CD8-positive, alpha-beta T cell (primary cell): ENCODE measurements at regions of chr4 and their contacts with region 1.

Region 1: GRCh38 chr4:122922877-122923511 is 597 bp upstream of the NUDT6 start:
- DNase-seq: peak; percentile 72 to 92 (median 89)
- ATAC-seq: peak; percentile 98
- H3K4me3 ChIP-seq: peak overlapping the region; percentile 79 to 87
- H3K4me3 Mint-ChIP-seq: peak overlapping the region; percentile 99
- H3K27ac ChIP-seq: peak overlapping the region; percentile 62 to 74
- H3K27ac Mint-ChIP-seq: peak overlapping the region; percentile 96
- H3K4me1 ChIP-seq: peaks cover 20% of the 10 kb centered on the region
- H3K4me1 Mint-ChIP-seq: peaks cover 17% of the 10 kb centered on the region
- H3K27me3 ChIP-seq: no peaks in the 10 kb centered on the region
- H3K27me3 Mint-ChIP-seq: no peaks in the 10 kb centered on the region
- CTCF ChIP-seq: no peak

Region 2: GRCh38 chr4:121823505-121824170 is 1099.4 kb before region 1 on chr4 and contains the start of gene CCNA2:
- CTCF ChIA-PET with region 1: no interaction called
- POLR2A ChIA-PET with region 1: no interaction called
- intact Hi-C with region 1: loop called (anchors 10 kb)
- DNase-seq: peak; percentile 90 to 97 (median 95)
- ATAC-seq: peak; percentile 98
- H3K4me3 ChIP-seq: peak within 1 kb of the TSS; percentile 62 to 74
- H3K4me3 Mint-ChIP-seq: peak within 1 kb of the TSS; percentile 91
- H3K27ac ChIP-seq: peak within 1 kb of the TSS; percentile 64 to 77
- H3K27ac Mint-ChIP-seq: peak within 1 kb of the TSS; percentile 86
- H3K4me1 ChIP-seq: peaks cover 8% of the 10 kb centered on the region
- H3K4me1 Mint-ChIP-seq: peaks cover 13% of the 10 kb centered on the region
- H3K27me3 ChIP-seq: no peaks in the 10 kb centered on the region
- H3K27me3 Mint-ChIP-seq: no peaks in the 10 kb centered on the region
- CTCF ChIP-seq: no peak
- total RNA-seq, gene CCNA2: 0.22 to 0.43 TPM

Region 3: DNA sequence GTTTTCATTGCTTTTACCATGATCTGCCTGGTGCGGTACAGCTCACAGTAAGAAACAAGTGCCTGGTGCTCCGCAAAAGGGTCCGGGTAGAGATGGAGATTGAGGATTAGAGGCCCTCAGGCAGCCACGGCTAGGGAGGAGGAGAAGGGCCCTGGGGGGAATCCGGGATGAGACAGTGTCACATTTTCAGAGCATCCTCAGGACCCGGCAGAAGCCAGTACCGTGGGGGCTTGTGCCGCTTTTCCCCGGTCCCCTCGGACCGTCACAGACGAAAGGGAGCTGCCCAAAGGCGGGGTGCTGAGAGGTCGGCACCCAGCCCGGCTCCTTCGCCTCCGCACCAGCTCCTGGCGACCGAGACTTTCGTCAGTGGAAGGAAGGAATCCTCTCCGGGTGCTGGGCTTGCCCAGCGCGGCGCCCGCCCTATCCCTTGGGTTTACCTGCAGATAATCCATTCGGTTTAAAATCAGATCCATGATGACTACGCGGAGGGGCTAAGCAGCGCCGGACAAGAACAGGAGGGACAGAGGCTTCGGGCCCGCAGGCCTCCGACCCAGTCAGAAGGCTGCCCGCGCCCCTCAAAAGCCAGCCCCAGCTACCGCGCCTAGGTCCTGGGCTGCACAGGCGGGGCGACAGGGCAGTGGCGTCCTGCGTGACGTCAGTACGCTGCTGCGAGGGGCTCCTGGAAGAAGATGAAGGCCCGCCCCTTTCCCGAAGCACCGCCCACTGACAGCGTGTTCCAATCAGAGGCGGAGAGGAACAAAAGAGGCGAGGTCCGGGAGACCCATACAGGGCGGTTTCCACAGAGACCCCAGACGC is 1052.9 kb before region 1 on chr4 and contains the start of gene BBS7:
- CTCF ChIA-PET with region 1: no interaction called
- POLR2A ChIA-PET with region 1: no interaction called
- intact Hi-C with region 1: loop called in 1 of 2 experiments (anchors 10 kb)
- DNase-seq: peak; percentile 91 to 98 (median 96)
- ATAC-seq: peak; percentile 99
- H3K4me3 ChIP-seq: peak within 1 kb of the TSS; percentile 88 to 92
- H3K4me3 Mint-ChIP-seq: peak within 1 kb of the TSS; percentile 97
- H3K27ac ChIP-seq: peak within 1 kb of the TSS; percentile 74 to 79
- H3K27ac Mint-ChIP-seq: peak within 1 kb of the TSS; percentile 92
- H3K4me1 ChIP-seq: peaks cover 6% of the 10 kb centered on the region
- H3K4me1 Mint-ChIP-seq: peaks cover 14% of the 10 kb centered on the region
- H3K27me3 ChIP-seq: no peaks in the 10 kb centered on the region
- H3K27me3 Mint-ChIP-seq: peaks cover 7% of the 10 kb centered on the region
- CTCF ChIP-seq: no peak
- total RNA-seq, gene BBS7: 3.4 to 4.7 TPM

Region 4: GRCh38 chr4:122309988-122310626 is 612.9 kb before region 1 on chr4:
- CTCF ChIA-PET with region 1: no interaction called
- POLR2A ChIA-PET with region 1: no interaction called
- intact Hi-C with region 1: loop called in 1 of 2 experiments (anchors 10 kb)
- DNase-seq: peak in 1 of 9 experiments; percentile 11
- ATAC-seq: no peak
- H3K4me3 ChIP-seq: no peak overlapping the region
- H3K4me3 Mint-ChIP-seq: no peak overlapping the region
- H3K27ac ChIP-seq: no peak overlapping the region
- H3K27ac Mint-ChIP-seq: no peak overlapping the region
- H3K4me1 ChIP-seq: no peaks in the 10 kb centered on the region
- H3K4me1 Mint-ChIP-seq: no peaks in the 10 kb centered on the region
- H3K27me3 ChIP-seq: no peaks in the 10 kb centered on the region
- H3K27me3 Mint-ChIP-seq: no peaks in the 10 kb centered on the region
- CTCF ChIP-seq: peak; percentile 63

Region 5: DNA sequence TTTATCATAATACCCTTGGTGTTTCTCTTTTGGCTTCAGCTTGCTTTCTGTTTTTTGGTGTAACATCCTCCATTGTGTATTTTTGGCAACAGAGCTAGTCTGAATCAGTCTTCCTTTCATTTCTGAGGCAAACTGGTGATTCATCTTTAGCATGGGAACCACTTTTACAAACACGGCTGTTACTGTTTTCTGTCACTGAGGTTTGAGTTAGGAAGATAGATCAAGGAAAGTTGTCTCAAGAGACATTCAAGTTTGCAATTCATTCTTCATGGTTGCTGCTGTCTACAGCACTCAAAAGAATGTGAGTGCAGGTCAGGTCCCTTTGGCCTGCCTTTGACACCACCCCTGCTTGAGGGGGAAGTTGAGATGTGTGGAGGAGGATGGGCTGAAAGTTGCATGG is 338.5 kb before region 1 on chr4:
- CTCF ChIA-PET with region 1: no interaction called
- POLR2A ChIA-PET with region 1: no interaction called
- intact Hi-C with region 1: loop called in 1 of 2 experiments (anchors 10 kb)
- DNase-seq: peak in 1 of 9 experiments; percentile 11
- ATAC-seq: peak; percentile 48
- H3K4me3 ChIP-seq: no peak overlapping the region
- H3K4me3 Mint-ChIP-seq: no peak overlapping the region
- H3K27ac ChIP-seq: no peak overlapping the region
- H3K27ac Mint-ChIP-seq: peak overlapping the region; percentile 30
- H3K4me1 ChIP-seq: no peaks in the 10 kb centered on the region
- H3K4me1 Mint-ChIP-seq: peaks cover 7% of the 10 kb centered on the region
- H3K27me3 ChIP-seq: no peaks in the 10 kb centered on the region
- H3K27me3 Mint-ChIP-seq: no peaks in the 10 kb centered on the region
- CTCF ChIP-seq: no peak

Region 6: DNA sequence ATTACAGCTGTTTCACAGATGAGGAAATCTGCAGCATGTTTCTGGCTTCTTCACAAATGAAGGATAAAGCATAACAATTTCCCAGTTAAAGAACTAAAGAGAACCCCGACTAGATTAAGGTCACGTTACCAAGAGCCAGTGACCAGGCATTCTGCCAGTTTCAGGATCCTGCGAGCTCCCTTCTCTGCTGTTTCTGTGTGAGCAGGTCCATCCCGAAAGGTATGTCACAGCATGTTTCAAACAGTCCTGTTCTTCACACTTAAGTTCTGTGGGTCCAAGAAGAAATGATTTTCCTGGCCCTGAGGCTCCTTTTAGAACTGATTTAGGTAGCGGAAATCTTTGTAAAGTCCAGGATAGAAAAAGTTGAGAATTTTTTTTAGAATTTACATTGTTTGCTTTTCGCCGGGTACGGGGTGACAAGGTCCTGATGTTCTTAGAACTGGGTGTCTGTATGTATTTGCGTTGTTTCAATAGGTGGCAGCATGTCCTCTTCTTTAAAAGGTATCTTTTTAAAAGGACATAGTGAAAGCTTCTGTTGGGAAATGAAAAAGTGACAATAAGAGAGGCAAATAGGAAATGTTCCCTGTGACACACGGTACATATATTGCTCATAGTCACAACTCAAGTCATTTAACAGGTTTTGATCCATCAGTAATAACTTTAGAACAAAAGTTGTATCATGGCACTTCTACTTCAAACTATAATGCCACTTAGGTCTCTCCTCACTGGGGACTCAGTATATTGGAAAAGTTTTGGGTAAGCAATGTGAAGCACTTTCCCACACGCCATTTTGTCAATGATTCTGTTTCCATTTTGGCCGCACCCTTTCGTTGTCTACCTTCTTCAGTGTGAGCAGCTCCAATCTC is 320.5 kb before region 1 on chr4:
- CTCF ChIA-PET with region 1: no interaction called
- POLR2A ChIA-PET with region 1: no interaction called
- intact Hi-C with region 1: loop called in 1 of 2 experiments (anchors 5 kb)
- DNase-seq: peak in 2 of 9 experiments; percentile 31 to 51
- ATAC-seq: no peak
- H3K4me3 ChIP-seq: no peak overlapping the region
- H3K4me3 Mint-ChIP-seq: no peak overlapping the region
- H3K27ac ChIP-seq: no peak overlapping the region
- H3K27ac Mint-ChIP-seq: no peak overlapping the region
- H3K4me1 ChIP-seq: no peaks in the 10 kb centered on the region
- H3K4me1 Mint-ChIP-seq: no peaks in the 10 kb centered on the region
- H3K27me3 ChIP-seq: no peaks in the 10 kb centered on the region
- H3K27me3 Mint-ChIP-seq: peaks cover 20% of the 10 kb centered on the region
- CTCF ChIP-seq: no peak

Region 7: DNA sequence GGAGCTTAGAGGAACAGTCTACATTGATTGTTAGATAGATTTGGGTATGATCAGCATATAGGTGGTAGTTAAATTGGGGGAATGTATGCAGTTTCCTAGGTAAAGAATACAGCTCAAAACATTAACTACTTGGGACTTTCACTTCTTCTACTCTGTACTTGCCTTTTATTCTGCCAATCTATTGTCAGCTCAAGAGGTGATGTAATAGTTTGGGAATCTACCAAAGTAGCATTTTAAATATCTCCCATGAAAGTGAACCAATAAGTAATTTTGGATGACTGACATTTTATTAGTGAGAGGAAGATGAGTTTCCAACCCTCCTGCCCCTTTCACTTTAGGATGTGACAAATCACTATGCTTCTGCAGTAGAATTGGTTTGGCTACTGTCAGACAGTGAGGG is 44.0 kb before region 1 on chr4:
- CTCF ChIA-PET with region 1: no interaction called
- POLR2A ChIA-PET with region 1: no interaction called
- intact Hi-C with region 1: no loop called
- DNase-seq: no peak
- ATAC-seq: no peak
- H3K4me3 ChIP-seq: no peak overlapping the region
- H3K4me3 Mint-ChIP-seq: no peak overlapping the region
- H3K27ac ChIP-seq: no peak overlapping the region
- H3K27ac Mint-ChIP-seq: no peak overlapping the region
- H3K4me1 ChIP-seq: no peaks in the 10 kb centered on the region
- H3K4me1 Mint-ChIP-seq: no peaks in the 10 kb centered on the region
- H3K27me3 ChIP-seq: no peaks in the 10 kb centered on the region
- H3K27me3 Mint-ChIP-seq: peaks cover 4% of the 10 kb centered on the region
- CTCF ChIP-seq: no peak

Region 8: GRCh38 chr4:122900314-122900713 is 22.7 kb before region 1 on chr4:
- CTCF ChIA-PET with region 1: no interaction called
- POLR2A ChIA-PET with region 1: no interaction called
- intact Hi-C with region 1: no loop called
- DNase-seq: no peak
- ATAC-seq: no peak
- H3K4me3 ChIP-seq: no peak overlapping the region
- H3K4me3 Mint-ChIP-seq: no peak overlapping the region
- H3K27ac ChIP-seq: no peak overlapping the region
- H3K27ac Mint-ChIP-seq: no peak overlapping the region
- H3K4me1 ChIP-seq: no peaks in the 10 kb centered on the region
- H3K4me1 Mint-ChIP-seq: no peaks in the 10 kb centered on the region
- H3K27me3 ChIP-seq: no peaks in the 10 kb centered on the region
- H3K27me3 Mint-ChIP-seq: no peaks in the 10 kb centered on the region
- CTCF ChIP-seq: no peak

Region 9: GRCh38 chr4:122992057-122992456 is 69.1 kb after region 1 on chr4:
- CTCF ChIA-PET with region 1: no interaction called
- POLR2A ChIA-PET with region 1: no interaction called
- intact Hi-C with region 1: no loop called
- DNase-seq: no peak
- ATAC-seq: no peak
- H3K4me3 ChIP-seq: no peak overlapping the region
- H3K4me3 Mint-ChIP-seq: no peak overlapping the region
- H3K27ac ChIP-seq: no peak overlapping the region
- H3K27ac Mint-ChIP-seq: no peak overlapping the region
- H3K4me1 ChIP-seq: no peaks in the 10 kb centered on the region
- H3K4me1 Mint-ChIP-seq: no peaks in the 10 kb centered on the region
- H3K27me3 ChIP-seq: no peaks in the 10 kb centered on the region
- H3K27me3 Mint-ChIP-seq: no peaks in the 10 kb centered on the region
- CTCF ChIP-seq: no peak

Region 10: DNA sequence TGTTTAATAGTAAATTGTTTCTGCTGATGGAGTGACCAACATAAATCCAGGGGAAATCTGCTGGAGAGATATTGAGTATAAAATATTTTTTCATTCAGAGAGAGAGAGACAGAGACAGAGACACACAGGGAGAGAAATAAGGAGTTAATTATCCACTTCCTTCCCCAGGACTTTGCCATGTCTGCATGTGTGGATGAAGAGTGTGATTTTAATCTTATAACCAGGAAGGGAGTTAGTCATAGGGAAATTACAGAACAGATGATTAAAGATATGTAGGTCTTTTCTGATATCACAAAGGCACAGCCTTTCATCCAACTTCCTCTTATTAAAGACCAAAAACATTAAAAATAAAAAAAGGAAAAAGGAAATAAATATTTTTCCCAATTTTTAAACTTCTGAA is 999.9 kb after region 1 on chr4:
- CTCF ChIA-PET with region 1: no interaction called
- POLR2A ChIA-PET with region 1: no interaction called
- intact Hi-C with region 1: no loop called
- DNase-seq: no peak
- ATAC-seq: no peak
- H3K4me3 ChIP-seq: no peak overlapping the region
- H3K4me3 Mint-ChIP-seq: no peak overlapping the region
- H3K27ac ChIP-seq: no peak overlapping the region
- H3K27ac Mint-ChIP-seq: no peak overlapping the region
- H3K4me1 ChIP-seq: no peaks in the 10 kb centered on the region
- H3K4me1 Mint-ChIP-seq: no peaks in the 10 kb centered on the region
- H3K27me3 ChIP-seq: peaks cover 0 to 3% of the 10 kb centered on the region in 2 experiments
- H3K27me3 Mint-ChIP-seq: peaks cover 7% of the 10 kb centered on the region
- CTCF ChIP-seq: no peak